SK-N-SH (cell line): ENCODE measurements at regions of chr22 and their contacts with region 1.

Region 1: GRCh38 chr22:35894937-35895708 is 133.5 kb downstream of the RBFOX2 start:
- DNase-seq: peak; percentile 29
- H3K4me3 ChIP-seq: no peak overlapping the region
- H3K27ac ChIP-seq: peak overlapping the region in 1 of 2 experiments; percentile 93; a peak in 2 of 4 replicates
- H3K4me1 ChIP-seq: peaks cover 50 to 57% of the 10 kb centered on the region in 2 experiments
- H3K27me3 ChIP-seq: no peaks in the 10 kb centered on the region
- CTCF ChIP-seq: no peak
- EP300 ChIP-seq: no peak
- RAD21 ChIP-seq: peak; percentile 10; the same call in 1 of the 2 replicates

Region 2: GRCh38 chr22:35872451-35872850 is 22.7 kb before region 1 on chr22:
- CTCF ChIA-PET with region 1: no interaction called
- POLR2A ChIA-PET with region 1: no interaction called
- DNase-seq: no peak
- H3K4me3 ChIP-seq: no peak overlapping the region
- H3K27ac ChIP-seq: no peak overlapping the region
- H3K4me1 ChIP-seq: peaks cover 0 to 7% of the 10 kb centered on the region in 2 experiments; a peak in 2 of 4 replicates
- H3K27me3 ChIP-seq: no peaks in the 10 kb centered on the region
- CTCF ChIP-seq: no peak
- EP300 ChIP-seq: no peak
- RAD21 ChIP-seq: no peak

Region 3: GRCh38 chr22:35914665-35915476 is 19.7 kb after region 1 on chr22:
- CTCF ChIA-PET with region 1: interaction called, 18 read pairs
- POLR2A ChIA-PET with region 1: no interaction called
- DNase-seq: peak; percentile 62
- H3K4me3 ChIP-seq: peak overlapping the region; percentile 52 to 58
- H3K27ac ChIP-seq: peak overlapping the region; percentile 65 to 99
- H3K4me1 ChIP-seq: peaks cover 52 to 61% of the 10 kb centered on the region in 2 experiments; a peak in 3 of 4 replicates
- H3K27me3 ChIP-seq: no peaks in the 10 kb centered on the region
- CTCF ChIP-seq: no peak
- EP300 ChIP-seq: peak in 1 of 2 experiments; percentile 81; a peak in 2 of 4 replicates
- RAD21 ChIP-seq: no peak